ENCODE measurements at regions of chr3 and their contacts with region 1.

Region 1: DNA sequence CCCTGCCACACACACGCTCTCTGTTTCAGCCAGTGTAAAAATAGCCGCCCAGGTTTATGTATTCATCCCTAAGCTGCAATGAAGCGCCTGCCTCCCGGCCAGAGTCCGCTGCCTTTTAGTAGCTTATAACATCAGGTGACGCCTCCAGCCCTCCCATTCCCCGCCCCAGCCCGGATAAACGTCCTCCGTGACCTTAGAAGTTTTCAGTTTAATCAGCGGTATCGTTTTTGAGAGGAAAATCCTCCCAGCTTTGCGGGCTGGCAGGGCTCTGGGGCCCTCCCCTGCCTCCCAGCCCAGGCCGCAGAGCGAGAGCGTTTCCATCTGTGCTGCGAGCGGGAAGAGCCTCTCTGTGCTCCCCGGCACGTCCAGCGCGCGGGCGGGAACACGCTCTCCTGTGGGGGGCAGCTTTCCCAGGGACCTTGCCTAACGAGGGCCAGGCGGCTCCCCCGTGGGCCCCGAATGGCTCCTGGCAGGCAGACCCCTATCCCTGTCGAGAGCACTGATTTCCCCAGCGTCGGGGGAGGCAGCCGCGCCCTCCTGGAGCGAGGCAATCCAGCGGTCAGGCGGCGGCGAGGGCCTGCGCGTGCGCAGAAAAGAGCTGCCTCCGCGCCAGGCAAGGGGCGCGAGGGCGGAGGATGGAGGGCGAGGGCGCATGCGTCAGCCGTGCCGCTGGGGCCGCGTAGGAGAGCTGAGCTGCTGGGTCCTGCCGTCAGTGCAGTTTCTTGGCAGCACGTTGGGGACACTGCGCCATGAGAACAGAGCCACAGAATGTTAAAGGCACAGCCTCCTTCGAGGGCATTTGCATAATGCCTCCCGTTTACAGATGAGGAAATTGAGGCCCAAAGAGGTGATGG is 71.1 kb downstream of the CCNL1 start:
- DNase-seq: peak; percentile 89 to 98
- ATAC-seq: peak; percentile 94 to 96 (median 95)
- H3K4me3 ChIP-seq: peak overlapping the region; percentile 91
- H3K4me3 Mint-ChIP-seq: peak overlapping the region; percentile 87
- H3K27ac ChIP-seq: peak overlapping the region; percentile 93
- H3K27ac Mint-ChIP-seq: peak overlapping the region; percentile 85 to 95
- H3K4me1 ChIP-seq: peaks cover 20% of the 10 kb centered on the region
- H3K4me1 Mint-ChIP-seq: peaks cover 14 to 21% of the 10 kb centered on the region in 2 donors
- H3K27me3 ChIP-seq: no peaks in the 10 kb centered on the region
- H3K27me3 Mint-ChIP-seq: peaks cover 12 to 15% of the 10 kb centered on the region in 2 donors
- CTCF ChIP-seq: peak; percentile 16

Region 2: GRCh38 chr3:157122116-157122515 is 33.3 kb after region 1 on chr3:
- intact Hi-C with region 1: no loop called
- DNase-seq: no peak
- ATAC-seq: no peak
- H3K4me3 ChIP-seq: no peak overlapping the region
- H3K4me3 Mint-ChIP-seq: no peak overlapping the region
- H3K27ac ChIP-seq: no peak overlapping the region
- H3K27ac Mint-ChIP-seq: no peak overlapping the region
- H3K4me1 ChIP-seq: peaks cover 10% of the 10 kb centered on the region
- H3K4me1 Mint-ChIP-seq: peaks cover 8 to 10% of the 10 kb centered on the region in 2 donors
- H3K27me3 ChIP-seq: no peaks in the 10 kb centered on the region
- H3K27me3 Mint-ChIP-seq: no peaks in the 10 kb centered on the region
- CTCF ChIP-seq: no peak

Region 3: DNA sequence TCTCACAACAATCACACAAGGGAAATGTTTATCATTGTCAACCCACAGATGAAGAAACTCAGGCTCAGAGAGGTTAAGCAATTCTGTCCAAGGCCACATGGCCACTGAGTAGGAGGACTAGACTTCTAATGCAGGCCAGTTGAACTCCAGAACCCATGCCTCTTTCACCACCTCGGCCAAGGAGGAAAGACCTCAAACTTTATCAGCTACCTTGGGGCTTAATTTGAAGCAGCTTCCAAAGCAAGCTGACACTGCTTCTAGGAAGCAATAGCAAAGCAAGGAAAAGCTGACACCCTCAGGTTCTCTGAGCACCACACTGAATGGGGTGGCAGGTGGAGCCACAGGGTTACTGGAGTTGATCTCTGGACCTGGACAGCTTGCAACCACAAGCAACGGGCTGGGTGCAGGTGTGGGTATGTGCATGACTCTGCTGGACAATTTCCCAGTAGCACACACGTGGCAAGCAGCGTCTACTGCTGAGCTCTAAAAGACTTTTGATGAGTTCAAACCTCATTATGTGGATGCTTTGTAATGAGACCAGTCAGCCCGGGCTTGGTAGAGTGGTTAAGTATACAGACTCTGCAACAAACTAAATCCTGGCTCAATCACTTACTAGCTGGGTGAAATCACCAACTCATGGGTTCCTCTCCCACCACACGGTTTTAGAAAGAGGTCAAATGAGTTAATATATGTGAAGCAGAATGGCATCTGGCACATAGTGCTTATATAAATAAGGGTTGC is 48.0 kb after region 1 on chr3:
- intact Hi-C with region 1: loop called (anchors 2 kb)
- DNase-seq: no peak
- ATAC-seq: peak in 1 of 3 donors; percentile 9
- H3K4me3 ChIP-seq: no peak overlapping the region
- H3K4me3 Mint-ChIP-seq: no peak overlapping the region
- H3K27ac ChIP-seq: no peak overlapping the region
- H3K27ac Mint-ChIP-seq: peak overlapping the region; percentile 57 to 67
- H3K4me1 ChIP-seq: peaks cover 35% of the 10 kb centered on the region
- H3K4me1 Mint-ChIP-seq: peaks cover 21 to 22% of the 10 kb centered on the region in 2 donors
- H3K27me3 ChIP-seq: no peaks in the 10 kb centered on the region
- H3K27me3 Mint-ChIP-seq: no peaks in the 10 kb centered on the region
- CTCF ChIP-seq: no peak

Measured in natural killer cell (primary cell).